ENCODE measurements at regions of chr1 and their contacts with region 1.

Region 1: DNA sequence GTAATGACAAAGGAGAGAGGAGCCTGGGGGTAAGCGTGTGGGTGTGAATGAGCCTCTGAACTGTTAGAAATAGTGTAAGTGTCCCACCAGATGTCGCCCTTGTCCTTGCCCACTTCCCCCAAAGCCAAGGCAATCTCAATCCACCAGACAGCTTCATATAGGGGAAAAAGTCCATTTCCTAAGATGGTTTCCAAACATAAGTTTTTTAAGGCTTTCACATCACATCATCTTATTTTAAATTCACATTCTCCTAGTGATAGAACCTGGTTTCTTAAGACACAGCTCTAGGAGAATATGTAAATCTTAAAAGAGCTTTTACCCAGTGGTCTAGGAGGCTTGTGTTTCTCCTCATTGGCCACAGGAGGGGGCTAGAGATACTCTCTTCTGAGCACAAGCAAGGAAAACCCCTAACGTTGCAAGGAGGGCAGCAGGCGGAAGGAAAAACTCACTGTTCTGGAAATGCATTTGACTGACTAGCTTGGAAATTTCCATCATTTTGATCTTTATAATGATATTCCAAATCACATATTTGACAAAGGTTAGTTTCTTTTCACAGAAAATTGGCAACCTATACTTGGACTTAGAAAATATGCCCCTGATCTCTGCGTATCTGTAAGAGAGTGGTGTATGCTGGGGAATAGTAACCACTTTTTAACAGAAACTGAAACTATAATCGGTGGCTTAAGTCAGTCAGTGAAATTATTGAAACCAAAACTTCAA is 51.9 kb upstream of the LPAR3 start:
- H3K4me3 Mint-ChIP-seq: peak overlapping the region; percentile 61
- H3K27ac Mint-ChIP-seq: peak overlapping the region; percentile 73
- H3K4me1 Mint-ChIP-seq: peaks cover 9% of the 10 kb centered on the region
- H3K27me3 Mint-ChIP-seq: peaks cover 5% of the 10 kb centered on the region

Region 2: GRCh38 chr1:84985365-84985764 is 40.4 kb after region 1 on chr1:
- intact Hi-C with region 1: no loop called
- H3K4me3 Mint-ChIP-seq: no peak overlapping the region
- H3K27ac Mint-ChIP-seq: peak overlapping the region; percentile 1
- H3K4me1 Mint-ChIP-seq: peaks cover 16% of the 10 kb centered on the region
- H3K27me3 Mint-ChIP-seq: no peaks in the 10 kb centered on the region

Region 3: DNA sequence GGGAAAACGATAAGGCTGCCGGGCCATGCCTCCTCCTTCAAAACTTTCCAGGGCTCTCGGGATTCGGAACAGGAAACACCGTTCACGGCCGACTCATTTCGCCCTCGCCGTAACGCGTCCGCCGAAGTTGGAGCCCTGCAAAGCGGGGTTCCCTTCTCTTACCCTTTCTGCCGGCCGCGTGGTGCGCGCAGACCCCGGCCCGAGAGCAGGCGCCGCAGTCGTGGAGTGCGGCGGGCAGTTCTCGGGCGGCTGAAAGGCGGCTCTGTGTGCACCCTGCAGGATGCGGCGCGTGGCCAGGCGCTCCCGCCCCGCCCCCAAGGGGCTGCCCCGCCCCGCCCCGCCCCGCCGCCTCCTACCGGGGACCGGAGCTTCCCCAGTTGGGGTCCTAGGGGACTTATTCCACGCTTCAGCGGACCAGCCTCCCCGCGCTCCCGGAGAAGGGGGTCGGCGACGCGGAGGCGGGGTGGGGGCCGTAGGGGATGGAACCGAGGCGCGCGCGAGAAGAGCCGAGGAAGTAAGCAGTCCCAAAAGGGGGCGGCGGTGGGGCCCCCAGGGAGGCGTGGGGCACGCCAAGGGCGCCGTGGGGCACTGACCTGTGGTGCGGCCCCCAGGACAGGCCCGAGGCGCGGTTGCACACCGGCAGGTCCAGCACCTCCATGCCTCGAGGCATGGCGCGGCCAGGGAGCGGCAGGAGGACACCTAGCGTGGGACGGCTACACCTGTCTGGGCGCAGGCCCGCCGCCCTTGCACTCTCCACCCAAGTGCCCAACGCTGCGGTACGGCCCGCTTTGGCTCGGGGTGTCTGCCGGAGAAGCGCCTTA is 52.1 kb after region 1 on chr1 and contains the start of gene MCOLN2:
- intact Hi-C with region 1: loop called (anchors 5 kb)
- H3K4me3 Mint-ChIP-seq: peak within 1 kb of the TSS; percentile 87
- H3K27ac Mint-ChIP-seq: peak within 1 kb of the TSS; percentile 63
- H3K4me1 Mint-ChIP-seq: peaks cover 38% of the 10 kb centered on the region
- H3K27me3 Mint-ChIP-seq: peaks cover 26% of the 10 kb centered on the region

Region 4: GRCh38 chr1:85027242-85027983 is 82.5 kb after region 1 on chr1:
- intact Hi-C with region 1: loop called (anchors 1 kb)
- H3K4me3 Mint-ChIP-seq: no peak overlapping the region
- H3K27ac Mint-ChIP-seq: no peak overlapping the region
- H3K4me1 Mint-ChIP-seq: no peaks in the 10 kb centered on the region
- H3K27me3 Mint-ChIP-seq: peaks cover 3% of the 10 kb centered on the region

Region 5: GRCh38 chr1:85078903-85079302 is 134.0 kb after region 1 on chr1:
- intact Hi-C with region 1: loop called (anchors 2 kb)
- H3K4me3 Mint-ChIP-seq: no peak overlapping the region
- H3K27ac Mint-ChIP-seq: no peak overlapping the region
- H3K4me1 Mint-ChIP-seq: no peaks in the 10 kb centered on the region
- H3K27me3 Mint-ChIP-seq: peaks cover 3% of the 10 kb centered on the region